ENCODE measurements at regions of chr7 and their contacts with region 1.

Region 1: DNA sequence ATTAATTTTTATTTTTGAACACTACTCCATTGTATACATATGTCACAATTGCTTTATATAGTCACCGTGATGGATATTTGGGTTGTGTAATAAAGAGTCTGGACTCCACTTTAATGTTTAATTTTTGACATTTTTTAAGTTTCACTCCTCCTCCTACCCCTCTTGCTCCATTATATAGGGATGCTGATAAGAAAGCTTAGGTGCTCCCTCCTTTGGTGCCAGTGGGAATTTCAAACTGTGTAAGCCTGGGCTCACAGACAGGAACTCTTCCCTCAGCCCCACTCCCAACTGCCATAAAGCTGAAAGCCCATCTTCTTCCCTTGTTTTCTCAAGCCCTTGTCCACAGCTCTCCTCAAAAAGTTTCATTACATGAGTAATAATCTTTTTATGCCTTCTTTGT is 47.6 kb downstream of the TWIST1 start:
- DNase-seq: no peak
- H3K4me3 ChIP-seq: no peak overlapping the region
- H3K27ac ChIP-seq: no peak overlapping the region
- H3K4me1 ChIP-seq: no peaks in the 10 kb centered on the region
- H3K27me3 ChIP-seq: no peaks in the 10 kb centered on the region
- CTCF ChIP-seq: peak in 2 of 3 experiments; percentile 34 to 39; a peak in 2 of 4 replicates
- EP300 ChIP-seq: no peak
- POLR2A ChIP-seq: no peak
- RAD21 ChIP-seq: peak; percentile 59 to 64

Region 2: DNA sequence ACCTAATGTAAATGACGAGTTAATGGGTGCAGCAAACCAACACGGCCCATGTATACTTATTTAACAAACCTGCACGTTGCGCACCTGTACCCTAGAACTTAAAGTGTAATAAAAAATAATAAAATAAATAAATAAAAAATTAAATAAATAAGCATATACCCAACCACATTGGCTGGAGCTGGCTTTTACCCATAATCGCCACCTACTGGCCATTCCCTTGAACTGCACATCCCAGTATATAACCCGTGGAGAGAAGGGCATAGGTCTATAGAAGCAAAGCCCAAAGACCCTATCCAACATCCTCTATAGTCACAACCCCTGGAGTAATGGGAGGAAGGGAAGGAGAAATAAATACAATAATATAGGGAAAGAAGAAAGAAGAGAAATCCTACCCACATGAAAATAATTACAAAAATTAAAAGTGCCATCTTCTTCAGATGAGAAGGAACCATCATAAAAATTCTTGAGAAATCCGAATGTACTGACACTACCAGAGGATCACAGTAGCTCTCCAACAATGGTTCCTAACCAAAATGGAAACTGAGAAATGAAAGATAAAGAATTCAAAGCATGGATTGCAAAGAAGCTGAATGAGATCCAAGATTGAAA is 18.0 kb before region 1 on chr7:
- CTCF ChIA-PET with region 1: interaction called, 23 read pairs
- POLR2A ChIA-PET with region 1: no interaction called
- DNase-seq: peak in 1 of 2 experiments; percentile 64
- H3K4me3 ChIP-seq: no peak overlapping the region
- H3K27ac ChIP-seq: no peak overlapping the region
- H3K4me1 ChIP-seq: no peaks in the 10 kb centered on the region
- H3K27me3 ChIP-seq: no peaks in the 10 kb centered on the region
- CTCF ChIP-seq: peak; percentile 42 to 66 (median 60)
- EP300 ChIP-seq: no peak
- POLR2A ChIP-seq: no peak
- RAD21 ChIP-seq: peak; percentile 47 to 64

Measured in H1 (cell line).